MCF 10A (cell line): ENCODE measurements at regions of chr11 and their contacts with region 1.

Region 1: DNA sequence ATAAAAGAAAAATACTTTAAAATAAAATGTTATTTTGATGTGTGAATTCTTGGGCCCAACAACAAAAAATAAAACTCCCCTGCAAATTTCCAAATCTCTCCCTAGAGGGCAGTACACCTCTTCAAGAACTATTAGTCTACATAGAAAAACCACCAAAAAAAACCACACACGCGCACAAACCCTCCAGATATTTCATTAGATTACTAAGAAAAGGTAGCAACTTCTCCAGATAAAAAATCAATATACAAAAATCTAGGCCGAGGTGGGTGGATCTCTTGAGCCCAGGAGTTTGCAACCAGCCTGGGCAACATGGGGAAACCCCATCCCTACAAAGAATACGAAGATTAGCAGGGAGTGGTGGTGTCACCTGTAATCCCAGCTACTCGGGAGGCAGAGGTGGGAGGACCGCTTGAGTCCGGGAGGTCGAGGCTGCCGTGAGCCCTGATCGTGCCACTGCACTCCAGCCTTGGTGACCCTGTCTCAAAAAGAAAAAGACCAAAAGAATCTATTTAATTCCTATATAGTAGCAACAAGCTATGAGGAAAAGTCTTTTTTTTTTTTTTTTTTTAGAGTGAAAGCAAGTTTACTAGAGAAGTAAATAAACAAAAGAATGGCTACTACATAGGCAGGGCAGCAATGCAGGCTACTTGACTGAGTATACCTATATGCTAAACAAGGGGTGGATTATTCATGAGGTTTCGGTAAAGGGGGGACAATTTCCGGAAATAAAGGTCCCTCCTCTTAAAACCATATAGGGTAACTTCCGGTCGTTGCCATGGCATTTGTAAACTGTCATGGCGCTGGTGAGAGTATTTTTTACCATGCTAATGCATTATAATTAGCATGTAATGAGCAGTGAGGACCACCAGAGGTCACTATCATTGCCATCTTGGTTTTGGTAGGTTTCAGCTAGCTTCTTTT is 13.1 kb downstream of the B3GNT6 start:
- DNase-seq: peak; percentile 93
- H3K4me3 Mint-ChIP-seq: peak overlapping the region; percentile 68
- H3K27ac Mint-ChIP-seq: no peak overlapping the region
- H3K4me1 Mint-ChIP-seq: peaks cover 12% of the 10 kb centered on the region
- H3K27me3 Mint-ChIP-seq: no peaks in the 10 kb centered on the region
- CTCF ChIP-seq: peak; percentile 63

Region 2: DNA sequence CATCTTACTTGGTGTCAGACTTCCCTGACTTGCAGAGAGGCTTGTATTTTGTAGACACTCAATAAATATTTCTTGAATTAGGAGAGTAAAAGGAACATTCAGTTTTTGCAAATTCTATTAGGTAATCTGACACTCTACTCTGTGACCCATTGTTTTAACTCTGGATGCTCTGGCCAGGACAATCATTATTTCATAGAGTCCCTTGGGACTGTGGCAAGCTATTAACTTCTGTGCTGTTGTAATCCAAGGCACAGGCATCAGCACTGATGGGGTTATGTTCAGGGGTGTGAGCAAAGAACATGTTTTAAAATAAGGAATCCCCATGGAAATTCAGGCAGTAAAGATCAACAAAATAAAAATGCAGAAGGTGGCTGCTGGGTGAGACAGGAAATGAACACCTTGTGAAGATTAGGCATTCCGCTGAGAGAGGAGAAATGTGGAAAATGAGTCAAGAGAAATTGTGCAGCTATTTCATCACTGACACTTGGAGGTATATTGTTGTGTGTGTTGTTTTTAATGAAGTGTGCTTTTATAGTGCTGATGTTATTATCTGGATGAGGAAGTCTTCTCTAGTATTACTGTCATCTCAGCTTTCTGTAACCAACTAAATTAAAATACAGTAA is 1016.2 kb before region 1 on chr11:
- CTCF ChIA-PET with region 1: no interaction called
- POLR2A ChIA-PET with region 1: no interaction called
- intact Hi-C with region 1: no loop called
- DNase-seq: peak; percentile 46
- H3K4me3 Mint-ChIP-seq: no peak overlapping the region
- H3K27ac Mint-ChIP-seq: no peak overlapping the region
- H3K4me1 Mint-ChIP-seq: peaks cover 18% of the 10 kb centered on the region
- H3K27me3 Mint-ChIP-seq: no peaks in the 10 kb centered on the region
- CTCF ChIP-seq: no peak

Region 3: GRCh38 chr11:76734456-76735420 is 312.5 kb before region 1 on chr11:
- CTCF ChIA-PET with region 1: interaction called, 7 read pairs
- POLR2A ChIA-PET with region 1: no interaction called
- intact Hi-C with region 1: loop called (anchors 2 kb)
- DNase-seq: no peak
- H3K4me3 Mint-ChIP-seq: no peak overlapping the region
- H3K27ac Mint-ChIP-seq: no peak overlapping the region
- H3K4me1 Mint-ChIP-seq: no peaks in the 10 kb centered on the region
- H3K27me3 Mint-ChIP-seq: peaks cover 13% of the 10 kb centered on the region
- CTCF ChIP-seq: no peak

Region 4: GRCh38 chr11:76997512-76997911 is 49.8 kb before region 1 on chr11:
- CTCF ChIA-PET with region 1: no interaction called
- POLR2A ChIA-PET with region 1: no interaction called
- intact Hi-C with region 1: no loop called
- DNase-seq: no peak
- H3K4me3 Mint-ChIP-seq: no peak overlapping the region
- H3K27ac Mint-ChIP-seq: no peak overlapping the region
- H3K4me1 Mint-ChIP-seq: no peaks in the 10 kb centered on the region
- H3K27me3 Mint-ChIP-seq: no peaks in the 10 kb centered on the region
- CTCF ChIP-seq: no peak

Region 5: GRCh38 chr11:77035039-77035994 is 11.9 kb before region 1 on chr11:
- CTCF ChIA-PET with region 1: interaction called, 11 read pairs
- POLR2A ChIA-PET with region 1: no interaction called
- intact Hi-C with region 1: no loop called
- DNase-seq: peak; percentile 91
- H3K4me3 Mint-ChIP-seq: no peak overlapping the region
- H3K27ac Mint-ChIP-seq: no peak overlapping the region
- H3K4me1 Mint-ChIP-seq: peaks cover 7% of the 10 kb centered on the region
- H3K27me3 Mint-ChIP-seq: peaks cover 15% of the 10 kb centered on the region
- CTCF ChIP-seq: no peak

Region 6: GRCh38 chr11:77073328-77074001 is 26.2 kb after region 1 on chr11:
- CTCF ChIA-PET with region 1: interaction called, 4 read pairs
- POLR2A ChIA-PET with region 1: interaction called, 5 read pairs
- intact Hi-C with region 1: loop called (anchors 1 kb)
- DNase-seq: peak; percentile 76
- H3K4me3 Mint-ChIP-seq: no peak overlapping the region
- H3K27ac Mint-ChIP-seq: peak overlapping the region; percentile 74
- H3K4me1 Mint-ChIP-seq: peaks cover 11% of the 10 kb centered on the region
- H3K27me3 Mint-ChIP-seq: no peaks in the 10 kb centered on the region
- CTCF ChIP-seq: peak; percentile 19

Region 7: DNA sequence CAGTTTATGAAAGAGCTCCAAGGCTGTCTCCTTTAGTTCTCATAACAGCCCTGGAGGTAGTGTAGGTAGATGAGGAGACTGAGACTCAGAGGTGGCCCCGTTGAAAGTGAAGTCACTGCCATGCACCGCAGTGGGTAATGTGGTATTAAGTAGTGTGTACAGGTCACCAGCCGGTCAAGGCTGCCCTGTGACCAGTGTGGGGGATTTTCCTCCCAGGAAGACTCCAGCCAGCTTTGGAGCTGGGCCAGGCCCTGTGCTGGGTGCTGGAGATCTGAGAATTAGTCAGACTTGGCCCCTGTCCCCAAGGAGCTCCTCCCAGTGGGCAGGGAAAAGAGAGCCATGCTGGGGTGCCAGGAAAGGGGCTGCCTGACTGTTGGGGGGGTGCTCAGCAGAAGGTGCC is 60.7 kb after region 1 on chr11:
- CTCF ChIA-PET with region 1: interaction called, 11 read pairs
- POLR2A ChIA-PET with region 1: no interaction called
- intact Hi-C with region 1: loop called (anchors 1 kb)
- DNase-seq: peak; percentile 92
- H3K4me3 Mint-ChIP-seq: no peak overlapping the region
- H3K27ac Mint-ChIP-seq: no peak overlapping the region
- H3K4me1 Mint-ChIP-seq: peaks cover 14% of the 10 kb centered on the region
- H3K27me3 Mint-ChIP-seq: no peaks in the 10 kb centered on the region
- CTCF ChIP-seq: no peak

Region 8: DNA sequence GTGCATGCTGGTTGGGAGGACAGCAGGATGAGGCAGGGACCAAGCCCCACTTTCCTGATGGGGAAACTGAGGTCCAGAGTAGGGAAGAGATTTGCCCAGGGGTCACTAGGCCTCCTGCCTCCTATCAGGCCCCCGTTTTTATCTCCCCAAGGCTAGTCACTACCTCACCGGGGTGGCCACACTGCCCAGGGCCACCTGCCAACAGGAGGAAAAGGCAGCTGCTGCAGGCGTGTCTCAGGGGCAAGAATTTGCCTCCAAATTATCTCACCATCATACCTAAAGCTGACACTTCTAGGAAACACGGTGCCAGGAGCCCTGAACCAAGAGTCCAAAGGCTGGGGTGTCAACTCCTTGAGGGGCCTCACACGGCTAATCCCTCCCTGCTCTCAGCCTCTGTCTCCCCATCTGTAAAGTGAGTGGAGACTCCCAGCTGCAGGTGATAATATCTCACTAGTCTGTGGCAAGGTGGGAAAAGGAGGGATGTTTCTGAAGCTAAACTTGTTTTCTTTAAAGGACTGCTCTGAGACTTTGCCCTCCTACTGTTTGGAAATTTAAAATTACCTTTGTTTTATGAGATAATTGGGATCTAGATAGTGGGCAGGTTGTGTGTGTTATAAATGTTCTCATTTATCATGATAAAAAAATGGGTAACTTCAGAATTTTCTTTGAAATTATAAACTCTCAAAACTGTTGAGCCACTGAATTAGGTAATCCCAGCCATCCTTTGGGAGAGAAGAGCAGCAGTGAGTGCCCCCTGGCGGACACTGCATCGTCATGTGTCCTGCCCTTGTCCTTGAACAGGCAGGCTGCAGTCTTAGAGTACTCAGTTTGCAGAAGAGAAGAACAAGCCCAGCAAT is 140.7 kb after region 1 on chr11:
- CTCF ChIA-PET with region 1: interaction called, 8 read pairs
- POLR2A ChIA-PET with region 1: no interaction called
- intact Hi-C with region 1: loop called (anchors 1 kb)
- DNase-seq: peak; percentile 83
- H3K4me3 Mint-ChIP-seq: no peak overlapping the region
- H3K27ac Mint-ChIP-seq: no peak overlapping the region
- H3K4me1 Mint-ChIP-seq: no peaks in the 10 kb centered on the region
- H3K27me3 Mint-ChIP-seq: peaks cover 12% of the 10 kb centered on the region
- CTCF ChIP-seq: peak; percentile 79